ENCODE measurements at regions of chr6 and their contacts with region 1.

Region 1: DNA sequence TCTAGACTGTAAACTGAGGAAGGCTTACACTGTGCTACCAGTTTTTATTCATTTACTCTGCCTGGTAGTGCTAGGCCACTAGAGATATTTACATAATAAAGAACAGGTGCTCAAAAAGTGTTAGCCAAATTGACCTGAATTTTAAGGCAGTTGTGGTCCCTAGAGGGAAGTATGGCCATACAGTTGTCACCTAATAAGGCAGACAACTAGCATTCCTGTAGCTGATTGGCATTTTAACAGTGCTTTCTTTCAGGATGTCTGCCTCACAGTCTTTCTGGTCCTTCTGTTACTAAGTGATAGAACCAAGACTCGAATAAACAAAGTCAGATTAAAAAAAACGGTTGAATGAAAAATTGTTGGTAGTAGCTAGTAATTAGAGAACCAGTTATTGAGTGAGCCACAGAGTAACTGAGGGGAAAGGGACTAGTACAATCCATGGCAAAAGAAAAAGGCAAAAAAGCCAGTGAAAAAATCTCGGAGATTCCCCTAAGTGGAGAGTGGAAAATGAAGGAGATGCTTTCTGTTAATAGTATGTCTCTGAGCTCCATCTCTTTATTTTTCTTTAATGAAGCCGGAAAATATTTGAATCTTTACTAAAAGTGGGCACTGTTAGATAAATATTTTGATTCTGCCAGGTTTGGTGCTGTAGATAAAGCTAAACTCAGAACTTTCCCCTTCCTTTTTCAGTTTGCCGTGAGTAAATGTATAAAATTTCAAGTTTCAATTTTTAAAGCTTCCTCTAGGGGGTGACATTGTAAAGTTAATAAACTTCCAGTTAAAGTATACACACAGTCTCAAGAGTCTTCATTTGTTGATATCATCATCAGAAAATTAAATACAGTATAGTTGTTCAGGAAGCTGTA is 9.1 kb downstream of the VTA1 start:
- DNase-seq: peak; percentile 45 to 70 (median 64)
- H3K4me3 ChIP-seq: peak overlapping the region in 3 of 7 experiments; percentile 25 to 54 (median 42)
- H3K27ac ChIP-seq: peak overlapping the region; percentile 40 to 56
- H3K4me1 ChIP-seq: peaks cover 0 to 13% (median 3%) of the 10 kb centered on the region in 4 experiments
- H3K27me3 ChIP-seq: no peaks in the 10 kb centered on the region

Region 2: GRCh38 chr6:142171351-142171750 is 15.2 kb after region 1 on chr6:
- CTCF ChIA-PET with region 1: interaction called, 10 read pairs
- POLR2A ChIA-PET with region 1: no interaction called
- DNase-seq: no peak
- H3K4me3 ChIP-seq: no peak overlapping the region
- H3K27ac ChIP-seq: no peak overlapping the region
- H3K4me1 ChIP-seq: peaks cover 0 to 2% (median 0%) of the 10 kb centered on the region in 4 experiments
- H3K27me3 ChIP-seq: no peaks in the 10 kb centered on the region

Region 3: GRCh38 chr6:142474531-142475289 is 318.6 kb after region 1 on chr6:
- CTCF ChIA-PET with region 1: interaction called, 11 read pairs
- POLR2A ChIA-PET with region 1: no interaction called
- DNase-seq: peak; percentile 49 to 67 (median 62)
- H3K4me3 ChIP-seq: no peak overlapping the region
- H3K27ac ChIP-seq: no peak overlapping the region
- H3K4me1 ChIP-seq: peaks cover 0 to 10% (median 0%) of the 10 kb centered on the region in 4 experiments
- H3K27me3 ChIP-seq: no peaks in the 10 kb centered on the region

Measured in common myeloid progenitor, CD34-positive (primary cell).